SK-N-SH (cell line): ENCODE measurements at regions of chr16 and their contacts with region 1.

Region 1: GRCh38 chr16:29700253-29700987 is 21.4 kb downstream of the QPRT start:
- DNase-seq: peak; percentile 88
- H3K4me3 ChIP-seq: no peak overlapping the region; a peak in 1 of 4 replicates
- H3K27ac ChIP-seq: no peak overlapping the region
- H3K4me1 ChIP-seq: no peaks in the 10 kb centered on the region; a peak in 1 of 4 replicates
- H3K27me3 ChIP-seq: no peaks in the 10 kb centered on the region
- CTCF ChIP-seq: peak; percentile 78
- EP300 ChIP-seq: no peak
- RAD21 ChIP-seq: peak; percentile 88

Region 2: GRCh38 chr16:29686740-29687332 is 13.6 kb before region 1 on chr16:
- CTCF ChIA-PET with region 1: interaction called, 15 read pairs
- POLR2A ChIA-PET with region 1: no interaction called
- DNase-seq: no peak
- H3K4me3 ChIP-seq: no peak overlapping the region
- H3K27ac ChIP-seq: no peak overlapping the region
- H3K4me1 ChIP-seq: no peaks in the 10 kb centered on the region
- H3K27me3 ChIP-seq: no peaks in the 10 kb centered on the region
- CTCF ChIP-seq: no peak
- EP300 ChIP-seq: no peak
- RAD21 ChIP-seq: no peak

Region 3: GRCh38 chr16:29710227-29711219 is 10.1 kb after region 1 on chr16:
- CTCF ChIA-PET with region 1: interaction called, 22 read pairs
- POLR2A ChIA-PET with region 1: no interaction called
- DNase-seq: peak; percentile 61
- H3K4me3 ChIP-seq: no peak overlapping the region
- H3K27ac ChIP-seq: no peak overlapping the region
- H3K4me1 ChIP-seq: peaks cover 0 to 2% of the 10 kb centered on the region in 2 experiments; a peak in 1 of 4 replicates
- H3K27me3 ChIP-seq: no peaks in the 10 kb centered on the region
- CTCF ChIP-seq: peak; percentile 64
- EP300 ChIP-seq: no peak
- RAD21 ChIP-seq: peak; percentile 64

Region 4: GRCh38 chr16:29729116-29729521 is 28.7 kb after region 1 on chr16:
- CTCF ChIA-PET with region 1: interaction called, 33 read pairs
- POLR2A ChIA-PET with region 1: no interaction called
- DNase-seq: peak; percentile 71
- H3K4me3 ChIP-seq: no peak overlapping the region; a peak in 1 of 4 replicates
- H3K27ac ChIP-seq: no peak overlapping the region
- H3K4me1 ChIP-seq: no peaks in the 10 kb centered on the region; a peak in 1 of 4 replicates
- H3K27me3 ChIP-seq: peaks cover 7% of the 10 kb centered on the region
- CTCF ChIP-seq: peak; percentile 71
- EP300 ChIP-seq: no peak
- RAD21 ChIP-seq: peak; percentile 72

Region 5: DNA sequence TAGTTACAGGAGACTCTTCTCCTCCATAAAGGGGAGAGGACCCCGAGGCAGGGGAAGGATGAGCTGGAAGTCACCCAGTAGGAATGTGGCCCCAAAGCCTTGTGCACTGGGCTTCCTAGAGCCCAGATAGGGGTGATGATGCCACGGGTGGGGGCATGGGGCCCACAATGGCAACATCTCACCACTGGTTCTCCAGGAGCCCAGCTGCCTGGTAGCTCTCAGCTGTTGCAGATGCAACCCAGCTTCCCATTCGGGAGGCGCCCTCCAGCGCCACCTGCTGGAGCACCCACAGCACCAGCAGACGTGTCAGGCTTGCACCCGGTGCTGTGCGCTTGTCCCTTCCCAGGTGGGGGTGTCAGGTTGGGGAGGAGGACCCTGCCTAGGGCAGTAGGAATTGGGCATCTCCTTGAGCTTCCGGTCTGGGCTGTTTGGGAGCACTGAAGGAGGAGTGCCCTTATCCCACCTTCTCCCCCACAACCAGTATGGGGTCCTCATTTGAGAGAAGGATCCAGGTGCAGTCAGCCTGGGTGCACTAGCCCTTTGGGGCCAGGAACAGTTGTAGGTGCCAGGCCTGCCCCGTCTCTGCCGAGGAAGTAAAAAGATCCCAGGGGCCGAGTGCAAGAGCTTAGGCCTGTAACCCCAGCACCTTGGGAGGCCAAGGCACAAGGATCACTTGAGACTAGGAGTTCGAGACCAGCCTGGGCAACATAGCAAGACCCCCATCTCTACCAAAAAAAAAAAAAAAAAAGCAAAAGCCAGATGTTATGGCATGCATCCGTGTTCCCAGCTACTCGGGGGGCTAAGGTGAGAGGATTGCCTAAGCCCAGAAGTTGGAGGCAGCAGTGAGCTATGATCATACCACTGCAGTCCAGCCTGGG is 148.2 kb after region 1 on chr16:
- CTCF ChIA-PET with region 1: interaction called, 14 read pairs
- POLR2A ChIA-PET with region 1: no interaction called
- DNase-seq: peak; percentile 83
- H3K4me3 ChIP-seq: no peak overlapping the region; a peak in 1 of 4 replicates
- H3K27ac ChIP-seq: no peak overlapping the region
- H3K4me1 ChIP-seq: no peaks in the 10 kb centered on the region
- H3K27me3 ChIP-seq: no peaks in the 10 kb centered on the region
- CTCF ChIP-seq: peak; percentile 89
- EP300 ChIP-seq: no peak
- RAD21 ChIP-seq: peak; percentile 70